Breast epithelium (tissue), 4 donors: ENCODE measurements at regions of chr10 and their contacts with region 1.

Region 1: GRCh38 chr10:60162631-60163030 is 227.0 kb downstream of the ANK3 start:
- DNase-seq: no peak
- H3K4me3 ChIP-seq: no peak overlapping the region
- H3K27ac ChIP-seq: no peak overlapping the region
- H3K4me1 ChIP-seq: no peaks in the 10 kb centered on the region
- H3K27me3 ChIP-seq: no peaks in the 10 kb centered on the region
- CTCF ChIP-seq: no peak
- POLR2A ChIP-seq: no peak

Region 2: DNA sequence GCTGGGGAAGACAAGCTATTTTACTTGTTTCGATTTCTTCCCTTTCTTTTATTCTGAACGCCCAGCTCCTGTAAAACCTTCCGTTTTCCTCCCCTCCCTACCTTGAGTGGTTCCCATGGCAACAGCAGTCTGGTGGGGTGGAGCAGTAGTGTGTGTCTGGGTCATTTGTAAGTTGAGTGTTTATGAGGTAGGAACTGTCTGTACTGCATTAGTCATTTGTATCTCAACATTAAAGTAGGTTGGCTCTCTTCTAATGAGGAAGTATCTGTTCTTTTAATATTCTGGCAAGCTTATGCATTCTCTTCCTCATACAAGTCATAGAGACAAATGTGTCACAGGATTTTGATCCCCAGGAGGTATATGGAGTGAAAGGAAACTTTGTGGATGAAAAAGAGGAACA is 171.0 kb before region 1 on chr10:
- intact Hi-C with region 1: loop called (anchors 5 kb)
- DNase-seq: peak in 1 of 2 donors; percentile 66
- H3K4me3 ChIP-seq: peak overlapping the region in 2 of 3 donors; percentile 28 to 40
- H3K27ac ChIP-seq: peak overlapping the region; percentile 85 to 90
- H3K4me1 ChIP-seq: peaks cover 0 to 4% of the 10 kb centered on the region in 2 donors
- H3K27me3 ChIP-seq: no peaks in the 10 kb centered on the region
- CTCF ChIP-seq: no peak
- POLR2A ChIP-seq: no peak

Region 3: DNA sequence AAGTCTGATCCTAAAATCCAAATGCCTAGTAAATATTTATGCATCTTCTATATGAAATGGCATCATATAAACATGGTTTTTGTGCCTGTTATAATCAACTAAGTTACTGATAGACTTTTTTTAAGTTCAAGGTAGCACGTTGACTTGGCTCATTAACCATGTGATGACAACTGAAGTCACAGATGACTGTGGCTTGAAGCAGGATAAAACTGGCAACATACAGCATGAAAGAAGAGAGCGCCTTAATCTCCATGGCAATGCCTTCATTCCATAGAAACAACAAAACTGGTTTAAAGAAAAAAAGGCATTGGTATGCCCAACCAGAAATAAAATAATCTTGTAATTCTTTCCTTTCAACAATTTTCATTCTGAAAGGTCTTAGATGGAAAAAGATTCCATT is 426.7 kb after region 1 on chr10:
- intact Hi-C with region 1: no loop called
- DNase-seq: no peak
- H3K4me3 ChIP-seq: no peak overlapping the region
- H3K27ac ChIP-seq: no peak overlapping the region
- H3K4me1 ChIP-seq: no peaks in the 10 kb centered on the region
- H3K27me3 ChIP-seq: no peaks in the 10 kb centered on the region
- CTCF ChIP-seq: no peak
- POLR2A ChIP-seq: no peak